Stomach (tissue), 19 donors: ENCODE measurements at regions of chr6 and their contacts with region 1.

Region 1: GRCh38 chr6:87660226-87660911 is 41.7 kb downstream of the AKIRIN2 start:
- DNase-seq: no peak
- H3K4me3 ChIP-seq: no peak overlapping the region
- H3K27ac ChIP-seq: peak overlapping the region in 1 of 5 donors; percentile 73
- H3K4me1 ChIP-seq: peaks cover 0 to 27% (median 10%) of the 10 kb centered on the region in 4 donors
- H3K27me3 ChIP-seq: no peaks in the 10 kb centered on the region
- CTCF ChIP-seq: no peak
- EP300 ChIP-seq: no peak
- POLR2A ChIP-seq: no peak

Region 2: DNA sequence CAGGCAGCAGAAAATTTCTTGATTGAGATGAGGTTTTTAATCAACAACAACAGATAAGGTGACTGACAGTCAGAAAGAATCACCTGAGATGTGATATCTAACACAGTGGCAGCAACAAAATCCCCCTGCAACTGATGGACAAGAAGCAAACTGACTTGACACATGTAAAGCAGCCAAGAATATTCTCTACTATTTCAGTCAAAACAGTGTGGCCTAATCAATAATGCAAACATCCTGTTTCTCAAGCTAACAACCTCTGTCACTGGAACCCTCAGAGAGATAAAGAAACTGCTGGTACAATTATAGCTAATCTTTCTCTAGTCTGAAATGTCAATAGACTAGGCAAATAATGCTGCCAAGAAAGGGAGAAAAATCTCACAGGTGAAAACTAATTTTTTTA is 560.9 kb before region 1 on chr6:
- intact Hi-C with region 1: no loop called
- DNase-seq: no peak
- H3K4me3 ChIP-seq: no peak overlapping the region
- H3K27ac ChIP-seq: no peak overlapping the region
- H3K4me1 ChIP-seq: peaks cover 0 to 5% (median 0%) of the 10 kb centered on the region in 4 donors
- H3K27me3 ChIP-seq: peaks cover 0 to 7% (median 0%) of the 10 kb centered on the region in 3 donors
- CTCF ChIP-seq: no peak
- EP300 ChIP-seq: no peak
- POLR2A ChIP-seq: no peak

Region 3: GRCh38 chr6:87799651-87800050 is 139.3 kb after region 1 on chr6:
- intact Hi-C with region 1: loop called (anchors 10 kb)
- DNase-seq: no peak
- H3K4me3 ChIP-seq: no peak overlapping the region
- H3K27ac ChIP-seq: no peak overlapping the region
- H3K4me1 ChIP-seq: peaks cover 0 to 8% (median 2%) of the 10 kb centered on the region in 4 donors
- H3K27me3 ChIP-seq: no peaks in the 10 kb centered on the region
- CTCF ChIP-seq: no peak
- EP300 ChIP-seq: no peak
- POLR2A ChIP-seq: no peak